Endothelial cell of umbilical vein (primary cell): ENCODE measurements at regions of chr2 and their contacts with region 1.

Region 1: DNA sequence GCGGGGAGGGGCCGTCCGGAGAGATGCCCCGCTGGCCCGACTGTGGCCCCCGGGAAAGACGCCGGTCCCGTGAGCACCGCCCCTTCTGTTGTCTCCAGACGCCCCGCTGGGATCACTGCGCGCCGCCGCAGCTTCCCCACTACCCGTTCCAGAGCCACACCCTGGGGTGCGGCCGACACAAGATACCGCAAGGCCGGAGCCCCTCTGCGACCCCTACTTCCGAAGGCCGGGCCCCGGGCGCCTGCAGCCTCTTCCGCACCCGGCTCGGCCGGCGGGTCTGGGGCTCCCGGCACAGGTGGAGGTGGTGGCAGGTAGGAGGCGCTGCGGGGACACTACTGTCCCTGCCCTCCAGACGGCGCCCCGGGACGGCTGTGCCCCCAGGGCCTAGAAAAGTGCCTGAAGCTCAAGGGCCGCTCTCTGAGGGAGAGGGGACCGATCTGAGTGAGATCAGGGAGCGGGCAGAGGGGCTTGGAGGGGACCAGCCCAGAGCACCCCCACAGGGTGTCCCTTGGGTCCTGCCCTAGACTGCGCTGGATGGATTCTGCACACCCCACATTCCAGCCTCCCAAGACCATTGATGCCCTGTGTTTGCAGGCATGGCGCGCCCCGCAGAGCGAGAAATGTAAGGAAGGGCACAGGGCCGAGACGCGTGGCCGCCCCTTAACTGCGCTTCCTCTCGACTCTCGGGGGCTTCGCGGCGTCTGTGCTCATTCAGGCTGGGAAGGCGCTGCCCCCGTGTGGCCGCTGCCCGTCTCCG is 80.0 kb downstream of the GFPT1 start:
- DNase-seq: peak; percentile 76
- H3K4me3 ChIP-seq: peak overlapping the region; percentile 17 to 42 (median 24)
- H3K27ac ChIP-seq: peak overlapping the region; percentile 69
- H3K4me1 ChIP-seq: peaks cover 9% of the 10 kb centered on the region
- H3K27me3 ChIP-seq: no peaks in the 10 kb centered on the region
- CTCF ChIP-seq: peak; percentile 84 to 98
- POLR2A ChIP-seq: peak; percentile 15

Region 2: GRCh38 chr2:69012310-69013141 is 294.5 kb before region 1 on chr2:
- CTCF ChIA-PET with region 1: interaction called, 25 read pairs
- POLR2A ChIA-PET with region 1: no interaction called
- dilution Hi-C with region 1: no loop called
- intact Hi-C with region 1: loop called (anchors 1 kb)
- DNase-seq: peak; percentile 56
- H3K4me3 ChIP-seq: peak overlapping the region in 2 of 3 experiments; percentile 54 to 63
- H3K27ac ChIP-seq: no peak overlapping the region
- H3K4me1 ChIP-seq: peaks cover 13% of the 10 kb centered on the region
- H3K27me3 ChIP-seq: peaks cover 7 to 9% of the 10 kb centered on the region in 2 experiments
- CTCF ChIP-seq: peak; percentile 66 to 74
- POLR2A ChIP-seq: no peak

Region 3: DNA sequence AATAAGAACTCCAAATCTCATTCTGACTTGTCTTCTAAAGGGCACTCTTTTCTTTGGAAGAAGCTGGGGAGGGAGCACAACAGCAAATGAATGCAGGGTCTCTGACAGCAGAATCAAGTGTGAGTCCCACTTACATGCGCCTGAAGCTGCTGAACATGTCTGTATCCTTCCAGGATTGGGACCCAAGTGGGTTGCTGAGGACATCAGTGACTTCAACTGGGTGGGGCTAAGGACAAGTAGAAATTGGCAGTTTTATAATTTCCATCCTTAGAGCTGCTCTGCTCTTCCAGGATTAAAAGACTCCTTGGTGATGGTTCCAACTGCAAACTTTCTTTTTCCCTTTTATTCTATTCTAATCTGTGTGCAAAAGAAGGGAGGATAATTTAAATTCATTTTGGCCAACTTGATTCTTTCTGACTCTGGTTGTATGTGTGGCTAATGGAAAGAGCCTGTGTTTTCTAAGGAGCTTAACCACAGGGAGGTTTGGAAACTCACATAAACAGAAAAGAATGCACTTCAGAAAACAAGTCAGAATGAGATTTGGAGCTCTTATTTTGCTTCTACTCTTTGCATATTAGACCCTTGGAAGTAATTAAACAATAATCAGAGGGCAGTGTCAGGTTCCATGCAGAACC is 273.4 kb before region 1 on chr2:
- CTCF ChIA-PET with region 1: interaction called, 22 read pairs
- POLR2A ChIA-PET with region 1: no interaction called
- dilution Hi-C with region 1: no loop called
- intact Hi-C with region 1: no loop called
- DNase-seq: no peak
- H3K4me3 ChIP-seq: no peak overlapping the region
- H3K27ac ChIP-seq: no peak overlapping the region
- H3K4me1 ChIP-seq: peaks cover 16% of the 10 kb centered on the region
- H3K27me3 ChIP-seq: no peaks in the 10 kb centered on the region
- CTCF ChIP-seq: no peak
- POLR2A ChIP-seq: no peak

Region 4: GRCh38 chr2:69122271-69122670 is 184.7 kb before region 1 on chr2:
- CTCF ChIA-PET with region 1: interaction called, 7 read pairs
- POLR2A ChIA-PET with region 1: no interaction called
- dilution Hi-C with region 1: no loop called
- intact Hi-C with region 1: loop called (anchors 5 kb)
- DNase-seq: peak; percentile 84
- H3K4me3 ChIP-seq: no peak overlapping the region
- H3K27ac ChIP-seq: peak overlapping the region; percentile 55
- H3K4me1 ChIP-seq: peaks cover 26% of the 10 kb centered on the region
- H3K27me3 ChIP-seq: no peaks in the 10 kb centered on the region
- CTCF ChIP-seq: no peak
- POLR2A ChIP-seq: no peak

Region 5: GRCh38 chr2:69177785-69178636 is 129.0 kb before region 1 on chr2:
- CTCF ChIA-PET with region 1: interaction called, 8 read pairs
- POLR2A ChIA-PET with region 1: no interaction called
- dilution Hi-C with region 1: no loop called
- intact Hi-C with region 1: loop called (anchors 1 kb)
- DNase-seq: peak; percentile 74
- H3K4me3 ChIP-seq: peak overlapping the region in 1 of 3 experiments; percentile 0
- H3K27ac ChIP-seq: peak overlapping the region; percentile 91
- H3K4me1 ChIP-seq: peaks cover 14% of the 10 kb centered on the region
- H3K27me3 ChIP-seq: no peaks in the 10 kb centered on the region
- CTCF ChIP-seq: no peak
- POLR2A ChIP-seq: no peak

Region 6: GRCh38 chr2:69253611-69254288 is 53.2 kb before region 1 on chr2:
- CTCF ChIA-PET with region 1: interaction called, 21 read pairs
- POLR2A ChIA-PET with region 1: no interaction called
- dilution Hi-C with region 1: no loop called
- intact Hi-C with region 1: loop called (anchors 1 kb)
- DNase-seq: peak; percentile 97
- H3K4me3 ChIP-seq: no peak overlapping the region
- H3K27ac ChIP-seq: peak overlapping the region; percentile 96
- H3K4me1 ChIP-seq: peaks cover 30% of the 10 kb centered on the region
- H3K27me3 ChIP-seq: no peaks in the 10 kb centered on the region
- CTCF ChIP-seq: no peak
- POLR2A ChIP-seq: peak; percentile 84